ENCODE measurements at regions of chr11 and their contacts with region 1.

Region 1: GRCh38 chr11:47407746-47408590 is at the start of gene SLC39A13:
- DNase-seq: peak; percentile 79
- ATAC-seq: peak; percentile 92
- H3K4me3 ChIP-seq: peak within 1 kb of the TSS; percentile 93
- H3K27ac ChIP-seq: peak within 1 kb of the TSS; percentile 95
- H3K4me1 ChIP-seq: peaks cover 17% of the 10 kb centered on the region
- H3K27me3 ChIP-seq: no peaks in the 10 kb centered on the region
- CTCF ChIP-seq: peak; percentile 71 to 96 (median 79); a peak in 4 of 6 replicates
- EP300 ChIP-seq: peak in 1 of 2 experiments; percentile 83; a peak in 2 of 4 replicates
- POLR2A ChIP-seq: peak; percentile 88
- RAD21 ChIP-seq: peak; percentile 87
- polyA plus RNA-seq, gene SLC39A13: 0.23 to 0.60 TPM

Region 2: GRCh38 chr11:47269002-47269828 is 138.8 kb before region 1 on chr11:
- CTCF ChIA-PET with region 1: interaction called, 38 read pairs
- POLR2A ChIA-PET with region 1: interaction called, 3 read pairs
- RAD21 ChIA-PET with region 1: interaction called, 11 read pairs
- SMC1A ChIA-PET with region 1: interaction called, 8 read pairs
- in situ Hi-C with region 1: no loop called
- intact Hi-C with region 1: loop called (anchors 2 kb)
- DNase-seq: no peak
- ATAC-seq: peak; percentile 77
- H3K4me3 ChIP-seq: peak overlapping the region; percentile 78
- H3K27ac ChIP-seq: peak overlapping the region; percentile 79
- H3K4me1 ChIP-seq: peaks cover 23% of the 10 kb centered on the region
- H3K27me3 ChIP-seq: no peaks in the 10 kb centered on the region
- CTCF ChIP-seq: 0 out of 6 replicates have a peak, but pooled peaks of 1 of the 3 experiments have one; percentile 20
- EP300 ChIP-seq: 0 out of 4 replicates have a peak, but pooled peaks of 1 of the 2 experiments have one; percentile 18
- POLR2A ChIP-seq: peak; percentile 14
- RAD21 ChIP-seq: no peak

Region 3: GRCh38 chr11:47340980-47341775 is 66.8 kb before region 1 on chr11:
- CTCF ChIA-PET with region 1: no interaction called
- POLR2A ChIA-PET with region 1: no interaction called
- RAD21 ChIA-PET with region 1: no interaction called
- SMC1A ChIA-PET with region 1: no interaction called
- in situ Hi-C with region 1: no loop called
- intact Hi-C with region 1: no loop called
- DNase-seq: no peak
- ATAC-seq: no peak; the same call in 2 of the 3 replicates
- H3K4me3 ChIP-seq: no peak overlapping the region
- H3K27ac ChIP-seq: no peak overlapping the region
- H3K4me1 ChIP-seq: no peaks in the 10 kb centered on the region
- H3K27me3 ChIP-seq: no peaks in the 10 kb centered on the region; a peak in 1 of 4 replicates
- CTCF ChIP-seq: no peak
- EP300 ChIP-seq: no peak
- POLR2A ChIP-seq: no peak
- RAD21 ChIP-seq: no peak

Region 4: GRCh38 chr11:47394322-47395222 is 13.4 kb before region 1 on chr11:
- CTCF ChIA-PET with region 1: interaction called, 15 read pairs
- POLR2A ChIA-PET with region 1: interaction called, 15 read pairs
- RAD21 ChIA-PET with region 1: interaction called, 12 read pairs
- SMC1A ChIA-PET with region 1: interaction called, 6 read pairs
- in situ Hi-C with region 1: no loop called
- intact Hi-C with region 1: no loop called
- DNase-seq: no peak
- ATAC-seq: peak; percentile 73
- H3K4me3 ChIP-seq: peak overlapping the region; percentile 25; the same call in 1 of the 2 replicates
- H3K27ac ChIP-seq: peak overlapping the region; percentile 93
- H3K4me1 ChIP-seq: peaks cover 51% of the 10 kb centered on the region
- H3K27me3 ChIP-seq: no peaks in the 10 kb centered on the region
- CTCF ChIP-seq: no peak
- EP300 ChIP-seq: no peak
- POLR2A ChIP-seq: peak; percentile 86
- RAD21 ChIP-seq: no peak

Region 5: DNA sequence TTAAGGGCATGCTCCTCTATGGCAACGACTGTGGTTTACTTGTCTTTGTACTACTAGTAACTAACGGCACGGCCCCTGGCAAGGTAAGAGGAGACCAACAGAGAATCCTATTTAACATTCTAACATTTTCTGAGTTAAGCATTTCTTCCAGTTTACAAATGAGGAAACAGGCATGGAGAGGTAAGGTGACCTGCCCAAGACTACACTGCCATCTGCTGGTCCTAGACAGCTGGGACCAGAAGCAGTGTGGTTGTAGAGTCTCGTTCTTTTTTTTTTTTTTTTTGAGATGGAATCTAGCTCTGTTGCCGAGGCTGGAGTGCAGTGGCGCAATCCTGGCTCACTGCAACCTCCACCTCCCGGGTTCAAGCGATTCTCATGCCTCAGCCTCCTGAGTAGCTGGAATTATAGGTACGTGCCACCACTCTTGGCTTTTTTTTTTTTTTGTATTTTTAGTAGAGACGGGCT is 46.2 kb after region 1 on chr11:
- CTCF ChIA-PET with region 1: interaction called, 11 read pairs
- POLR2A ChIA-PET with region 1: no interaction called
- RAD21 ChIA-PET with region 1: interaction called, 5 read pairs
- SMC1A ChIA-PET with region 1: interaction called, 4 read pairs
- in situ Hi-C with region 1: no loop called
- intact Hi-C with region 1: no loop called
- DNase-seq: peak; percentile 37
- ATAC-seq: peak; percentile 97
- H3K4me3 ChIP-seq: no peak overlapping the region
- H3K27ac ChIP-seq: no peak overlapping the region
- H3K4me1 ChIP-seq: no peaks in the 10 kb centered on the region
- H3K27me3 ChIP-seq: no peaks in the 10 kb centered on the region
- CTCF ChIP-seq: peak; percentile 80 to 87 (median 83)
- EP300 ChIP-seq: no peak
- POLR2A ChIP-seq: no peak
- RAD21 ChIP-seq: peak; percentile 81

Measured in GM12878 (cell line).